ENCODE measurements at regions of chr5 and their contacts with region 1.

Region 1: GRCh38 chr5:101390151-101390908 is 487.2 kb upstream of the ST8SIA4 start:
- DNase-seq: peak in 1 of 2 donors; percentile 13
- ATAC-seq: no peak
- H3K4me3 ChIP-seq: no peak overlapping the region
- H3K27ac ChIP-seq: no peak overlapping the region
- H3K4me1 ChIP-seq: no peaks in the 10 kb centered on the region
- H3K27me3 ChIP-seq: no peaks in the 10 kb centered on the region
- CTCF ChIP-seq: peak in 8 of 9 donors; percentile 21 to 73 (median 58)

Region 2: DNA sequence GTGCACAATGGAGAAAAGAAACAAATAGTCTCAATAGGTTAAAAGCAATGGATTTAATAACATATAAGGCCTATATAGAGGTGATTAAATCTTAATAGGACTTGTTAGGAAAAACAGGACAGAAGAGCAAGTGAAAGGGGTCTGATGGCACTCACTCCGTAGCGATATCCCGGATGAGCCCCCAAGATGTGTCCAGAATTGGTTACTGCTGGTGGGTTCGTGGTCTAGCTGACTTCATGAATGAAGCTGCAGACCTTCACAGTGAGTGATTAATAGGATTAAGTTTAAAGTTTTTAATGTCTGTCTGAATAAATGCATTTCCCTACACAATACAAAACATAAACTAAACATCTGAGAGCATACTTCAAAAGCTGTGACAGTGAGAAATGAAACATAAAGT is 965.5 kb before region 1 on chr5:
- intact Hi-C with region 1: loop called in 1 of 10 experiments (anchors 5 kb)
- DNase-seq: no peak
- ATAC-seq: no peak
- H3K4me3 ChIP-seq: no peak overlapping the region
- H3K27ac ChIP-seq: no peak overlapping the region
- H3K4me1 ChIP-seq: no peaks in the 10 kb centered on the region
- H3K27me3 ChIP-seq: no peaks in the 10 kb centered on the region
- CTCF ChIP-seq: no peak

Region 3: GRCh38 chr5:100430268-100431195 is 959.8 kb before region 1 on chr5:
- intact Hi-C with region 1: loop called in 2 of 10 experiments (anchors 1 to 5 kb)
- DNase-seq: peak; percentile 22 to 32
- ATAC-seq: no peak
- H3K4me3 ChIP-seq: no peak overlapping the region
- H3K27ac ChIP-seq: no peak overlapping the region
- H3K4me1 ChIP-seq: no peaks in the 10 kb centered on the region
- H3K27me3 ChIP-seq: no peaks in the 10 kb centered on the region
- CTCF ChIP-seq: peak; percentile 64 to 94 (median 86)

Region 4: GRCh38 chr5:100623719-100624118 is 766.6 kb before region 1 on chr5:
- intact Hi-C with region 1: loop called in 2 of 10 experiments (anchors 5 to 10 kb)
- DNase-seq: no peak
- ATAC-seq: peak in 2 of 8 donors; percentile 42 to 75
- H3K4me3 ChIP-seq: no peak overlapping the region
- H3K27ac ChIP-seq: no peak overlapping the region
- H3K4me1 ChIP-seq: no peaks in the 10 kb centered on the region
- H3K27me3 ChIP-seq: no peaks in the 10 kb centered on the region
- CTCF ChIP-seq: peak; percentile 13 to 71 (median 51)

Region 5: GRCh38 chr5:101346906-101347305 is 43.4 kb before region 1 on chr5:
- intact Hi-C with region 1: no loop called
- DNase-seq: no peak
- ATAC-seq: no peak
- H3K4me3 ChIP-seq: no peak overlapping the region
- H3K27ac ChIP-seq: no peak overlapping the region
- H3K4me1 ChIP-seq: no peaks in the 10 kb centered on the region
- H3K27me3 ChIP-seq: no peaks in the 10 kb centered on the region
- CTCF ChIP-seq: no peak

Region 6: GRCh38 chr5:101473483-101473882 is 83.2 kb after region 1 on chr5:
- intact Hi-C with region 1: no loop called
- DNase-seq: no peak
- ATAC-seq: no peak
- H3K4me3 ChIP-seq: no peak overlapping the region
- H3K27ac ChIP-seq: no peak overlapping the region
- H3K4me1 ChIP-seq: no peaks in the 10 kb centered on the region
- H3K27me3 ChIP-seq: no peaks in the 10 kb centered on the region
- CTCF ChIP-seq: no peak